ENCODE measurements at regions of chr3 and their contacts with region 1.

Region 1: GRCh38 chr3:1506090-1506489 is 413.3 kb downstream of the CNTN6 start:
- DNase-seq: no peak

Region 2: GRCh38 chr3:3260870-3261269 is 1754.8 kb after region 1 on chr3:
- CTCF ChIA-PET with region 1: interaction called, 11 read pairs
- POLR2A ChIA-PET with region 1: no interaction called
- DNase-seq: no peak